CD4-positive, alpha-beta T cell (primary cell): ENCODE measurements at regions of chr12 and their contacts with region 1.

Region 1: GRCh38 chr12:38906482-38907170 is 1.2 kb upstream of the CPNE8 start:
- DNase-seq: peak; percentile 22 to 80 (median 49)
- ATAC-seq: peak; percentile 75
- H3K4me3 ChIP-seq: peak overlapping the region; percentile 88
- H3K4me3 Mint-ChIP-seq: peak overlapping the region; percentile 92
- H3K27ac ChIP-seq: no peak overlapping the region
- H3K27ac Mint-ChIP-seq: peak overlapping the region; percentile 42
- H3K4me1 ChIP-seq: peaks cover 8% of the 10 kb centered on the region
- H3K4me1 Mint-ChIP-seq: peaks cover 35% of the 10 kb centered on the region
- H3K27me3 ChIP-seq: peaks cover 0 to 8% of the 10 kb centered on the region in 2 experiments
- H3K27me3 Mint-ChIP-seq: peaks cover 23% of the 10 kb centered on the region
- CTCF ChIP-seq: peak; percentile 66

Region 2: GRCh38 chr12:38316391-38317129 is 590.1 kb before region 1 on chr12 and contains the start of gene ALG10B:
- CTCF ChIA-PET with region 1: interaction called, 3 read pairs
- POLR2A ChIA-PET with region 1: no interaction called
- intact Hi-C with region 1: loop called in 1 of 2 experiments (anchors 10 kb)
- DNase-seq: peak; percentile 86 to 97 (median 90)
- ATAC-seq: peak; percentile 97
- H3K4me3 ChIP-seq: peak within 1 kb of the TSS; percentile 89
- H3K4me3 Mint-ChIP-seq: peak within 1 kb of the TSS; percentile 90
- H3K27ac ChIP-seq: peak within 1 kb of the TSS; percentile 80 to 96
- H3K27ac Mint-ChIP-seq: peak within 1 kb of the TSS; percentile 95
- H3K4me1 ChIP-seq: peaks cover 10% of the 10 kb centered on the region
- H3K4me1 Mint-ChIP-seq: peaks cover 39% of the 10 kb centered on the region
- H3K27me3 ChIP-seq: no peaks in the 10 kb centered on the region
- H3K27me3 Mint-ChIP-seq: no peaks in the 10 kb centered on the region
- CTCF ChIP-seq: peak; percentile 80
- total RNA-seq, gene ALG10B: 6.6 to 10.1 TPM